ENCODE measurements at regions of chr17 and their contacts with region 1.

Region 1: DNA sequence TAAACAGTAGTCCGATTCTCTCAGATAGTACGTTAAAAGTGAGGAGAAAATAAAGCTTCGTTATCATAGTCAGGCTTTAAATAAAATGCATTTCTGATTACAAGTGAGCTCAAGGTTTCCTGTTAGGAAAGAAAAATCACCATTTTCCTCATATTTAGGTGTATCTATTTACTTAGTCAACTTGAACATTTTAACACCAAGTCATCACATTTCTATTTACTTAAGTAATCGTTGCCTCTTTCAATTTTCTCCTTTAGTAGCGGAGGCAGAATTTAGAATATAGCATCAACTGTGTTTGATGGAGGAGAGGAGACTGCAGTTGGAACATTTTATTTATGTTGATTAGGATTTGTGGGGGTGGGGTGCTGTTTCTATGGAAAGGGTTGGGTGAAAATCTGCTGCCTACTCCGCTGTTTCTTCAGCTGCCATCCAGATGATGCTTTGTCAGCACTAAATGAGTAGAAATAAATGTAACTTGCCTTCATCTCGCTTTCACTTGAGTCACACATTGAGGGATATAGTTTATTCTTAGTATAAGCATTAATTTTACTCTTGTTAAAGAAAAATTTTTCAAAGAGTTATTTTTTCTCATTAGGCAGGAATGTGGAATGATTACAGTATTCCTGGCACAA is 42.3 kb downstream of the ABHD15 start:
- DNase-seq: no peak
- ATAC-seq: no peak
- H3K4me3 ChIP-seq: no peak overlapping the region
- H3K4me3 Mint-ChIP-seq: no peak overlapping the region
- H3K27ac ChIP-seq: no peak overlapping the region
- H3K27ac Mint-ChIP-seq: no peak overlapping the region
- H3K4me1 ChIP-seq: no peaks in the 10 kb centered on the region
- H3K4me1 Mint-ChIP-seq: no peaks in the 10 kb centered on the region
- H3K27me3 ChIP-seq: no peaks in the 10 kb centered on the region
- H3K27me3 Mint-ChIP-seq: no peaks in the 10 kb centered on the region

Region 2: GRCh38 chr17:29510953-29511352 is 13.6 kb before region 1 on chr17:
- CTCF ChIA-PET with region 1: no interaction called
- POLR2A ChIA-PET with region 1: no interaction called
- DNase-seq: no peak
- ATAC-seq: no peak
- H3K4me3 ChIP-seq: no peak overlapping the region
- H3K4me3 Mint-ChIP-seq: no peak overlapping the region
- H3K27ac ChIP-seq: no peak overlapping the region
- H3K27ac Mint-ChIP-seq: no peak overlapping the region
- H3K4me1 ChIP-seq: no peaks in the 10 kb centered on the region
- H3K4me1 Mint-ChIP-seq: peaks cover 0 to 2% (median 0%) of the 10 kb centered on the region in 3 donors
- H3K27me3 ChIP-seq: no peaks in the 10 kb centered on the region
- H3K27me3 Mint-ChIP-seq: no peaks in the 10 kb centered on the region

Region 3: DNA sequence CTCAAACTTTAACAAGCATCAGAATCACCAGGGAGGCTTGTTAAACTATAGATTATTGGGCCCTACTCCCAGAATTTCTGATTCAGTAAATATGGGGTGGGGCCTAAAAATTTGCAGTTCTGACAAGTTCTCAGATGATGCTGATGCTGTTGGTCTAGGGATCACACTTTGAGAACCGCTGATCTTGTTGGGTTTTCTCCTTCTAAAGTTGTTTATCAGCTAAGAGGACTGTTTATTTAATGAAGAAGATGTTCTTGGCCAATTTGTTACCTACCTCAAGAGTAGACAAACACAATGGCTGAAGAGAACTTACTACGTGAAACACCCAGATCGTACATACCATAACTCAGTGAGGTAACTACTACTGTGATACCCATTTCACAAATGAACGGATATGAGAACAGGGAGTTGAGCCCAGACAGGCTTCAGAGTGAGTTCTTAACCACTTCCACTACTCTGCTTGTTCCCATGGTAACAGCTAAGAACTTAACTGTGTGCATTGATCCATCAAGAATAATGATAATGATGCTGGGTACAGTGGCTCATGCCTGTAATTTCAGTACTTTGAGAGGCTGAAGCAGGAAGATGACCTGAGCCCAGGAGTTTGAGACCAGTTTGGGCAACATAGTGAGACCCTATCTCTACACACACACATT is 506.8 kb after region 1 on chr17:
- CTCF ChIA-PET with region 1: no interaction called
- POLR2A ChIA-PET with region 1: no interaction called
- DNase-seq: no peak
- ATAC-seq: no peak
- H3K4me3 ChIP-seq: no peak overlapping the region
- H3K4me3 Mint-ChIP-seq: no peak overlapping the region
- H3K27ac ChIP-seq: no peak overlapping the region
- H3K27ac Mint-ChIP-seq: no peak overlapping the region
- H3K4me1 ChIP-seq: peaks cover 0 to 2% of the 10 kb centered on the region in 2 experiments
- H3K4me1 Mint-ChIP-seq: peaks cover 0 to 2% (median 1%) of the 10 kb centered on the region in 3 donors
- H3K27me3 ChIP-seq: no peaks in the 10 kb centered on the region
- H3K27me3 Mint-ChIP-seq: no peaks in the 10 kb centered on the region

Region 4: DNA sequence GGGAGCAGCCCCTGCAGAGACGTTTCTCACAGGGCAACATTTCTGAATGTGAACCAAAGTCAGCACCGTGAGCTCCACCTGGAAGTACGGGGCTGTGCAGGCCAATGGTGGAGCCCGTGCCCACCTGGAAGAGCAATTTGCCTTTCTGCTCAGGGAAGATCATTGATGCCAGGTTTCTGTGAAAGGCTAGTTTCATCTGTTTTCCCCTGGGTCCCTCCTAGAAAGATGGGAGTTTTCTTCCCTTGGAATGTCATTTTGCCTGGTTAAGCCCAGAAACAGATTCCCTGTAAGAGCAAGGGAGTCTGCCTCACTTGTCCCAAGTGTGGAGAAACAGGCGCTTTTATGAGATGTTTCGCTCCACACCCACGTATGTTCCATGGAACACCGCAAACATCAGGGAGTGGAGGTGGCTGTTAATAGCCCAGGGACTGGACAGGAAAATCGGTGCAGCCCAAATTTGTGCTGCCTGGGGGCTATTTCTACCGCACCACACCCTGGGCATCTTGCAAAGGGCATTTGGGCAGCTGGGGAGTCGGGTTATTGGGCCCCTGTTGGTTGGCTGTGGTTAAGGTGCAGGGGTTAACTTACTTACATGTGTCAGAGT is 708.4 kb after region 1 on chr17:
- CTCF ChIA-PET with region 1: no interaction called
- POLR2A ChIA-PET with region 1: interaction called in 1 of 2 experiments, 12 read pairs
- DNase-seq: no peak
- ATAC-seq: no peak
- H3K4me3 ChIP-seq: no peak overlapping the region
- H3K4me3 Mint-ChIP-seq: no peak overlapping the region
- H3K27ac ChIP-seq: no peak overlapping the region
- H3K27ac Mint-ChIP-seq: no peak overlapping the region
- H3K4me1 ChIP-seq: peaks cover 0 to 26% of the 10 kb centered on the region in 2 experiments
- H3K4me1 Mint-ChIP-seq: peaks cover 6 to 23% (median 18%) of the 10 kb centered on the region in 3 donors
- H3K27me3 ChIP-seq: peaks cover 10 to 62% of the 10 kb centered on the region in 2 experiments
- H3K27me3 Mint-ChIP-seq: peaks cover 48 to 60% of the 10 kb centered on the region in 2 donors